ENCODE measurements at regions of chr2 and their contacts with region 1.

Region 1: DNA sequence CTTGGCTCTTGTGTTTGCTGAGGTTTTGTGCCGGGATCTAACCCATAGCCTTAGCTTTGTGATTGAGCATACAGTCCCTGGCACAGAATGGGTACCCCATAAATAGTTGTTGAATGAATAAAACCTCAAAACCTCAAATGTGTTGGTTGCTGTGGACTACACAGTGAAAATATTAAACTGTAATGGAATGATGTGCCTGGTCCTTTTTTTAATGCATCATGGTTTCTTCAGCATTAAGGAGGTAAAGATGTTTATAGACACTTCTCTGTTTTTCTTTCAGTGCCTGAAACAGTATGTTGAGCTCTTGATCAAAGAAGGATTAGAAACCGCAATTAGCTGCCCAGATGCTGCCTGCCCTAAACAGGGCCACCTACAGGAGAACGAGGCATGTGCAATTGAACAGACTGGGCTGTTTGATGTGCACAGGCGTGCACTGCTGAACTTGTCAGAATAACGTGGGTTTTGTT is 97.0 kb downstream of the RNF144A start:
- DNase-seq: no peak
- ATAC-seq: peak in 3 of 4 donors; percentile 35 to 48 (median 38)
- H3K4me3 ChIP-seq: no peak overlapping the region
- H3K27ac ChIP-seq: peak overlapping the region; percentile 85
- H3K4me1 ChIP-seq: peaks cover 93% of the 10 kb centered on the region
- H3K27me3 ChIP-seq: no peaks in the 10 kb centered on the region
- CTCF ChIP-seq: peak; percentile 38

Region 2: DNA sequence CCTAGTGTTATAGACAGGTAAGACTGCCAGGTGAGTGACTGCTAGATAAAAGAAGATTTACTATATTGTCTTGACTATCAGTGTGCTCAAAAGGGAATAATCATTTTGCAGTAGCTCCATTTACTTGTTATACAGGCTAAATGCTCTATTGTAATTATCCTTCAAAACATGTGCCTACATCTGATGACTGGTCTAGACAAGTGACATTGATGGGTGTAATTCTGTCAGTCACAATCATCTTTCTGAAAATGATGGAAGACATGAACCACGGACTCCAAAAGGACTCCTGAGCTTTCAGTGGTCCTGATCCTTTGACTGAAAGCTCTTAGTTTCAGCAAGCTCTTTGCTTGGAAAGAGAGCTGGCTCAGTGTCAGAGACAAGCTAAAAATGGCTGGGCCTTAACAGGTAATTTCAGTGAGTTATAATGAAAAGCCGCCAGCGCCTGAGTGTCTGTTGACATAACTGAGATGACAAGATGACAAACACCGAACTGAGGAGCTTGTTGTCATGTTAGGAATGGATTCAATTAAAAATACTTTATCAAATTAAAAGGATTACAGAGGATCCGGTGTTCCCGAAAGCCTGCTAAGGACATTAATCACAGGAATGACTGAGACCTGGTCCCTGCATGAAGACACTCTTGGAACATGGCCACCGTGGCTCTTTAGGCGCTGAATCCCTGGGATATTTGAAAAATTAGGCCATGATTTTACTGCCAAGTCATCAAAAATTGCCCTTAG is 290.2 kb before region 1 on chr2:
- intact Hi-C with region 1: no loop called
- DNase-seq: no peak
- ATAC-seq: peak; percentile 30 to 70 (median 58)
- H3K4me3 ChIP-seq: no peak overlapping the region
- H3K27ac ChIP-seq: peak overlapping the region; percentile 64
- H3K4me1 ChIP-seq: peaks cover 4% of the 10 kb centered on the region
- H3K27me3 ChIP-seq: no peaks in the 10 kb centered on the region
- CTCF ChIP-seq: no peak

Region 3: GRCh38 chr2:6922201-6922685 is 92.0 kb before region 1 on chr2:
- intact Hi-C with region 1: loop called (anchors 2 to 5 kb)
- DNase-seq: no peak
- ATAC-seq: no peak
- H3K4me3 ChIP-seq: no peak overlapping the region
- H3K27ac ChIP-seq: no peak overlapping the region
- H3K4me1 ChIP-seq: peaks cover 60% of the 10 kb centered on the region
- H3K27me3 ChIP-seq: no peaks in the 10 kb centered on the region
- CTCF ChIP-seq: no peak

Measured in psoas muscle (tissue), 8 donors.